ENCODE measurements at regions of chr20 and their contacts with region 1.

Region 1: GRCh38 chr20:56187534-56188198 is 60.9 kb upstream of the MC3R start:
- DNase-seq: no peak
- H3K4me3 ChIP-seq: no peak overlapping the region
- H3K27ac ChIP-seq: no peak overlapping the region
- H3K4me1 ChIP-seq: no peaks in the 10 kb centered on the region
- H3K27me3 ChIP-seq: no peaks in the 10 kb centered on the region
- CTCF ChIP-seq: no peak
- EP300 ChIP-seq: no peak
- POLR2A ChIP-seq: no peak

Region 2: GRCh38 chr20:55961376-55962330 is 226.0 kb before region 1 on chr20:
- in situ Hi-C with region 1: no loop called
- intact Hi-C with region 1: no loop called
- DNase-seq: no peak
- H3K4me3 ChIP-seq: no peak overlapping the region
- H3K27ac ChIP-seq: no peak overlapping the region
- H3K4me1 ChIP-seq: no peaks in the 10 kb centered on the region
- H3K27me3 ChIP-seq: no peaks in the 10 kb centered on the region
- CTCF ChIP-seq: no peak
- EP300 ChIP-seq: no peak
- POLR2A ChIP-seq: no peak

Region 3: GRCh38 chr20:56285491-56285890 is 97.8 kb after region 1 on chr20:
- in situ Hi-C with region 1: loop called in 1 of 4 experiments (anchors 25 kb)
- intact Hi-C with region 1: no loop called
- DNase-seq: no peak
- H3K4me3 ChIP-seq: no peak overlapping the region
- H3K27ac ChIP-seq: no peak overlapping the region
- H3K4me1 ChIP-seq: no peaks in the 10 kb centered on the region
- H3K27me3 ChIP-seq: no peaks in the 10 kb centered on the region
- CTCF ChIP-seq: no peak
- EP300 ChIP-seq: no peak
- POLR2A ChIP-seq: no peak

Region 4: DNA sequence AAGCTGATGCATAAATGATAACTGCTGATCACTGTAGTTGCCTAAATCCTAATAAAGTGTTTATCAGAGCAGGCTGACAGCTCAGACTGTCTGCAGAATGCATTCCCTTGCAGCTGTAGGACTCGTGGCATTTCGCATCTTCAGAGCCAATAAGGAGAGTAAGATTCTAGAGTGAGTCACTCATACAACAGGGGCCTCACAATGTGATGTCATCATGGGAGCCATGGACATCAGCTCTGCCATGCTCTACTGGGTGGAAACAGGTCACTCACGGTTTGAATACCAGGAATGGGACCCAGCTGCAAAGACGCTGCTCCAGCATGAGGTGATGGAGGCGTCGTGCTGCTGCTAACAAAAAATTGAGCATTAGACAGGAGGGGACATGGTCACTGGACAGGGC is 352.8 kb after region 1 on chr20:
- in situ Hi-C with region 1: no loop called
- intact Hi-C with region 1: no loop called
- DNase-seq: no peak
- H3K4me3 ChIP-seq: no peak overlapping the region
- H3K27ac ChIP-seq: no peak overlapping the region
- H3K4me1 ChIP-seq: no peaks in the 10 kb centered on the region
- H3K27me3 ChIP-seq: no peaks in the 10 kb centered on the region
- CTCF ChIP-seq: no peak
- EP300 ChIP-seq: no peak
- POLR2A ChIP-seq: no peak

Measured in transverse colon (tissue), 4 donors.